ENCODE measurements at regions of chr7 and their contacts with region 1.

Region 1: GRCh38 chr7:117673839-117674238 is 194.0 kb downstream of the CFTR start:
- DNase-seq: peak; percentile 43
- H3K4me3 ChIP-seq: no peak overlapping the region
- H3K27ac ChIP-seq: peak overlapping the region; percentile 28 to 59
- H3K4me1 ChIP-seq: no peaks in the 10 kb centered on the region
- H3K27me3 ChIP-seq: no peaks in the 10 kb centered on the region
- CTCF ChIP-seq: peak in 2 of 4 experiments; percentile 71 to 73
- POLR2A ChIP-seq: no peak

Region 2: DNA sequence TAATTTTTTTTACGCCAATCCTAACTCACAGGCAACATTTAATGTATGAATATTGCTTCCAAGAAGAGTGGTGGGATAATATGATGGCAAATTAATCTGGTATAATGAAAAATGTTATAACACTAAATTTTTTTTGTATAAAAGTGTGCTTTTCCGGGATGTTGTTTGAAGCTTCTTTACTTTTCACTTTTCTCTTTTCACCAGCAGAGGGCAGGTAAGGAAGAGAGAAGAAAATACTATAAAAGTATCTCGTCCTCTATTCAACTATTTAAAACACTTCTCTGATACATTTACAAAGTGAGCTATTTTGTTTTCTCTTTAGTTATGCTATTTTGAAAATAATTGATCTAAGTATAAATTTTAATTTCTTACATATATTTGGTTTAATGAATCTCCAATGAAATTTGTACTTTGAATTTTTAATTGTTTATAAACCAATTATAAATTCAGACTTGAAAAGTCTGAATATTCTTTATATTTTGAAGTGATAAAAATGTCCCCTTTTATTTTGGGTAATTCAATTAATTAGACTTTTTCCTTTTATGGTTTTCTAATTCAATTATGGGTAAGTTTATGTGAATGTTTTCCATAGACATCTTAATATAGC is 214.8 kb before region 1 on chr7:
- intact Hi-C with region 1: loop called (anchors 10 kb)
- DNase-seq: no peak
- H3K4me3 ChIP-seq: no peak overlapping the region
- H3K27ac ChIP-seq: no peak overlapping the region
- H3K4me1 ChIP-seq: no peaks in the 10 kb centered on the region
- H3K27me3 ChIP-seq: no peaks in the 10 kb centered on the region
- CTCF ChIP-seq: peak; percentile 28 to 84 (median 72)
- POLR2A ChIP-seq: no peak

Region 3: DNA sequence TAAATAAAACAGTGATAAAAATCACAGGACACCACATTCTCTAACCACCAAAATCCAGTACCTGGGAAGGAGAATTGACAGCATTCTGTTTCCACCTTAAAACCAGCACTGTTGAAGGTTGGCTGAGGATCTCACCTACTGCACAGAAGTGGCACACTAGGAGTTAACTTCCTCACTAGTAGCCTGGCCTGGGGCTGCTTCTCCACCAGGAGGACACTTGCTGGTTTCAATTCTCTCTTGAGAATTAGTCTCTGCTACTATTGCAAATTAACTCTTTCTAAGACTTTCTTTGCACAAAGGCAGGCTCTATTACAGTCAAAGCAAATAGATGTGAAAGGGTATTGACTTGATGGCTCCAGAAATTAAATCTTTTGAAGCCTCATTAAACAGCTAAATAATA is 201.7 kb after region 1 on chr7:
- intact Hi-C with region 1: no loop called
- DNase-seq: no peak
- H3K4me3 ChIP-seq: no peak overlapping the region
- H3K27ac ChIP-seq: no peak overlapping the region
- H3K4me1 ChIP-seq: no peaks in the 10 kb centered on the region
- H3K27me3 ChIP-seq: no peaks in the 10 kb centered on the region
- CTCF ChIP-seq: no peak
- POLR2A ChIP-seq: no peak

Measured in prostate gland (tissue), 2 donors.